Right cardiac atrium (tissue), 5 donors: ENCODE measurements at regions of chr12 and their contacts with region 1.

Region 1: GRCh38 chr12:121793838-121794533 is 498 bp upstream of the RHOF start:
- DNase-seq: peak; percentile 93 to 97 (median 97)
- ATAC-seq: peak; percentile 68 to 75
- H3K4me3 ChIP-seq: peak overlapping the region; percentile 20
- H3K27ac ChIP-seq: peak overlapping the region; percentile 65
- H3K4me1 ChIP-seq: peaks cover 7% of the 10 kb centered on the region
- H3K27me3 ChIP-seq: no peaks in the 10 kb centered on the region

Region 2: GRCh38 chr12:121697098-121697698 is 96.8 kb before region 1 on chr12:
- intact Hi-C with region 1: loop called in 3 of 4 experiments (anchors 5 kb)
- DNase-seq: peak in 1 of 3 donors; percentile 10
- ATAC-seq: no peak
- H3K4me3 ChIP-seq: no peak overlapping the region
- H3K27ac ChIP-seq: no peak overlapping the region
- H3K4me1 ChIP-seq: no peaks in the 10 kb centered on the region
- H3K27me3 ChIP-seq: no peaks in the 10 kb centered on the region

Region 3: DNA sequence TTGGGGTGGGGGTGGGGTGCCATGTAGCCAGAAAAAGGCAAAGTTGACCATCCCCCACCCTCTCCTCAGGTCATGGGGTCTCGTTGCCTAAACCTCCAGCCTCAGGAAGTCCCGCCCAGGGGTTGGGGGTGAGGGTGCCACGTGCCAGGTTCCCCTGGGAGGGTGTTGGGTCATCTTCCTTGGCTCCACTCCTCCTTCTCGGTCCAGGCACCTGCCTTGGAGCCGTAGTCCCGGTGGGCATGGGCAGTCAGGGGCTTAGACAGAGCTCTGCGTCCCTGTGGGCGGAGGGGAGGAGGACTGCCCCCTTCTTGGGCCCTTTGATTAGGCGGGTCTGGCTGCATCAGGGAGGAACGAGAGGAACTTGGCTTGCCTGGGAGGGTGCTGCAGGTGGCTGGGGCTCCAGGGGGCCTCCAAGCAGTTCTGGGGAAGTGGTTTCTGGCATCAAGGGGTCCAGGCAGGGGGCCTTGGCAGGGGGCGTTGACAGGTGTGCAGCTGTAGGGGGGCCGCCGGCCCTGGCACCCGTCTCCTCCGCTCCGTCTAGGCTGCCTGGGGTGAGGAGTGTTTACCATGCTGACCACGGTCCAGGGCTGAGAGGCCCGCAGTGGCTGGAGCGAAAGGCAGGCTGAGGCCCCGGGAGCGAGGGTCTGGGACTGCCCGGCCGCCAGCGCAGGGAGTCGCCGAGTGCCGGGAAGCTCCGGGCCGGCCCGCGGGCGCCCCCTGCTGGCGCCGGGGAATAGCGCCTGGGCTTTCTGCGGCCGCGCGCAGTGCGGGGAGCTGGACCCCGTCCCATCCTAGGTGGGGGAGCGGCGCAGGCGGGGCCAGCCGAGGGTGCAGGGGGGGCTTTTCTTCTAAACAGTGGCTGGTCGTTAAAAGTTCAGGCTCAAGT is 17.7 kb after region 1 on chr12:
- intact Hi-C with region 1: loop called in 3 of 4 experiments (anchors 2 kb)
- DNase-seq: peak; percentile 80 to 92 (median 89)
- ATAC-seq: peak; percentile 87 to 90
- H3K4me3 ChIP-seq: peak overlapping the region; percentile 57
- H3K27ac ChIP-seq: peak overlapping the region; percentile 40
- H3K4me1 ChIP-seq: peaks cover 11% of the 10 kb centered on the region
- H3K27me3 ChIP-seq: no peaks in the 10 kb centered on the region

Region 4: GRCh38 chr12:121894633-121895032 is 100.6 kb after region 1 on chr12:
- intact Hi-C with region 1: loop called in 3 of 4 experiments (anchors 5 kb)
- DNase-seq: peak in 2 of 3 donors; percentile 54 to 57
- ATAC-seq: no peak
- H3K4me3 ChIP-seq: no peak overlapping the region
- H3K27ac ChIP-seq: no peak overlapping the region
- H3K4me1 ChIP-seq: no peaks in the 10 kb centered on the region
- H3K27me3 ChIP-seq: no peaks in the 10 kb centered on the region